Left ventricle myocardium inferior (tissue), 1 donor: ENCODE measurements at regions of chr6 and their contacts with region 1.

Region 1: DNA sequence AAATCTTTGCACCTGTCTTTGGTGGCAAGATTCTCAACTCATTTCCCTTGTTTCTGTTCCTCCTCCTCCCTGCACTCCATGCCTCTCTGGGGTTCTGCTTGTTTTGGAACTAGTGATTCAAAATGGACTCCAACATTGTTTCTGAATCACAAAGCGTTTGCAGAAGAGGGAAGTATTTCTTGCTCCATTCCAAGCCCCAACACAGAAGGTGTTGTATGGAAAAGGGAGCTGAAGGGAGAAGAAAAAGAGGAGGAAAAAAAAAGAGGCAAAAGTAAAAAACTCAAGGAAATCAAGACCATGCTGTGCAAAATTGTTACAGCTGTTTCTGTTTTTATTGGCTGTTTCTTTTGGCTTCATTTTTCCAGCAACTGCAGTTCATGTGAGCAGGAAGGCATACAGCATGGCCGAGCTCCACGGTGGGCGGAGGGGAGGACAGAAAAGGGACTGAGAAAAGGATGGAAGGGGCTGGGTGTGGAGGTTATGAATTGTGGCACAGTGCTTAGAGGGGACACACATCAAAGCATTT is 66.9 kb upstream of the PRL start:
- DNase-seq: no peak
- H3K4me3 ChIP-seq: no peak overlapping the region
- H3K27ac ChIP-seq: no peak overlapping the region
- H3K4me1 ChIP-seq: peaks cover 10% of the 10 kb centered on the region
- H3K27me3 ChIP-seq: no peaks in the 10 kb centered on the region
- CTCF ChIP-seq: no peak

Region 2: DNA sequence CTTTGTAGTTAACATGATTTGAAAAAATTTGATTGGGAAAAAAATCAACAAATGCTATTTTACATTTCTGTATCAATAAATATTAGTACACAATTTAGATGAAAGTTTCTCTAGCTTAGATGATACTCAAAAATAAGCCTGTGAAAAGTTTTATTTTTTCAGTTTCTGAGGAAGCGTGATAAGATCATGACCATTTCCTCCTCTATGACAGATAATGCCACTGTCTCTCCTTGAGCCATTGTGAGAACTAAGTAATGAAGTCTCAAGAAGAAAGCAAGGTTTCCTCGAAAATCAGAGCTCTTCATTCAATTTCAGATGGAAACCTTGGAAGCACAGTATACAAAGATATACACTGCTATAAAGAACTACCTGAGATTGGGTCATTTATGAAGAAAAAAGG is 600.6 kb after region 1 on chr6:
- intact Hi-C with region 1: loop called (anchors 5 kb)
- DNase-seq: no peak
- H3K4me3 ChIP-seq: no peak overlapping the region
- H3K27ac ChIP-seq: no peak overlapping the region
- H3K4me1 ChIP-seq: no peaks in the 10 kb centered on the region
- H3K27me3 ChIP-seq: no peaks in the 10 kb centered on the region
- CTCF ChIP-seq: no peak